Posterior vena cava (tissue), 2 donors: ENCODE measurements at regions of chr10 and their contacts with region 1.

Region 1: DNA sequence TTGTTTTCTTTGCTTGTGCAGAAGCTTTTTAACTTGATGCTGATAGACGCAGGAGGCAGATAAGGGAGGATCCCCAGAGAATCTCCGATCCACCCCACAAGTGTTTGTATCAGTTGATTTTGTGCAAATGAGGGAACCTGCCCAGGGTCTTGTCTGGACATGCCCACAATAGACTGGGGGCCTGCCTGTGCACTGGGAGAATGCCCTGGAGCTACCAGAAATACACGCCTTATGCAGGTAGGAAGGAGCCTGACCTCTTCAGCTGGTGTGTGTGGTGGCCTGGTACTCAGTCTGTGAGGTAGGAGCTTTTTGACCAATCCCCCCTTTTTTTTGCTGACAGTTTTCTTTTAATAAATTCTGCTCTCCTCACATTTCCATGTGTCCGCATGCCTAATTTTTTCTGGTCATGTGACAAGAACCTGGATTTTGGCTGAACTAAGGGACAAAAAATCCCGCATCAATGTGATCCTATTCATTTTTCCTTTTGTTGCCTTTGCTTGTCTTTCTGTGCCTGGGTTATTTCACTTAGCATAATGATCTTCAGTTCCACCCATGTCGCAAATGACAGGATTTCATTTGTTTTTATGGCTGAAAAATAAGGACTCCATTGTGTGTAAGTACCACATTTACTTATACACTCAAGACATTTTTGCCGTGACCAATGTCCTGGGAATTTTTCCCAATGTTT is 430.6 kb upstream of the NRG3 start:
- DNase-seq: no peak

Region 2: DNA sequence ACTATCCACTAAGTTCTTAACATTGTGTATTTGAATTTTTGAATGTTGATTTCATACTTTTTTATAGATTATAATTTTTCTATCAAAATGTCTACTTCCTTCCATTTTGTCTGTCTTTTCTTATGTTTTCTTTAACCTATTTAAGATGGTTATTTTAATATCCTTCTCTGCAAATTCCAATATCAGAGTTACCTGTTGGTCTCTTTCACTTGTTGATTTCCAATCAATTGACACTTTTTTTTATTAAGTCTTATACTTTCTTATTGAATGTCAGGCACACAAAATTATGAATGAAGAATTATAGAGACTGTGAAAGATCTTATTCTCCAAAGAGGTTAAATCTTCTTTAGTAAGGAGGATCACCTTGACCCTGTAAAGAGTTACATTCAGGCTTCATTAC is 17.7 kb before region 1 on chr10:
- intact Hi-C with region 1: loop called in 1 of 2 experiments (anchors 1 kb)
- DNase-seq: no peak